Ascending aorta (tissue), 2 donors: ENCODE measurements at regions of chr2 and their contacts with region 1.

Region 1: DNA sequence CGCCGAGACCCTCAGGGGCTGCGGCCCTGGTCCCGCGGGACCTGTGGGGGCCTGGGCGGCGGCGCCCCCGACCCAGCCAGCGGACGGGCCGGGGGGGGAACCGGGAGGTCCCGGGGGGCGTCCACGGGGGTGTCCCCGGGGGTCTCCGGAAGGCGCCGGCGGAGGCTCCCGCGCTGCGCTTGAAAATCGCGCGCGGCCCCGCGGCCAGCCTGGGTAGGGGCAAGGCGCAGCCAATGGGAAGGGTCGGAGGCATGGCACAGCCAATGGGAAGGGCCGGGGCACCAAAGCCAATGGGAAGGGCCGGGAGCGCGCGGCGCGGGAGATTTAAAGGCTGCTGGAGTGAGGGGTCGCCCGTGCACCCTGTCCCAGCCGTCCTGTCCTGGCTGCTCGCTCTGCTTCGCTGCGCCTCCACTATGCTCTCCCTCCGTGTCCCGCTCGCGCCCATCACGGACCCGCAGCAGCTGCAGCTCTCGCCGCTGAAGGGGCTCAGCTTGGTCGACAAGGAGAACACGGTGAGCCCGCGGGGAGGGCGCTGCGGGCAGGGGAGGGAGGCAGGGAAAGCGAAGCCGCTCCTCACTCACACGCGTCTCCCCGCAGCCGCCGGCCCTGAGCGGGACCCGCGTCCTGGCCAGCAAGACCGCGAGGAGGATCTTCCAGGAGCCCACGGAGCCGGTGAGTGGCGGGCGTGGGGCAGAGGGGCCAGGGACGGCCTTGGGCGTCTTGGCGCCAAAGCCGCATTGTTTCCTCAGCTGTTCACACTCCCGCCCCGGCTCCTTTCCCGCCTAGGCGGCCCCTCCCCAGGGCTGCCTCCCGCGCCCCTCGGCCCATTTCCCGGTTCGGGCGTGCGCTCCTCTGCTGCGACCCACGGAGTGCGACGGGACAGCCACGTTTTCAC is at the start of gene RRM2:
- DNase-seq: peak; percentile 76 to 94
- H3K4me3 ChIP-seq: peak within 1 kb of the TSS; percentile 47 to 69
- H3K27ac ChIP-seq: no peak within 1 kb of the TSS
- H3K4me1 ChIP-seq: peaks cover 13 to 20% of the 10 kb centered on the region in 2 donors
- H3K27me3 ChIP-seq: peaks cover 7% of the 10 kb centered on the region
- CTCF ChIP-seq: no peak
- total RNA-seq, gene RRM2: not detected

Region 2: GRCh38 chr2:10003206-10004125 is 119.2 kb before region 1 on chr2:
- intact Hi-C with region 1: no loop called
- DNase-seq: no peak
- H3K4me3 ChIP-seq: no peak overlapping the region
- H3K27ac ChIP-seq: no peak overlapping the region
- H3K4me1 ChIP-seq: peaks cover 13 to 23% of the 10 kb centered on the region in 2 donors
- H3K27me3 ChIP-seq: no peaks in the 10 kb centered on the region
- CTCF ChIP-seq: no peak

Region 3: GRCh38 chr2:10072656-10073480 is 49.8 kb before region 1 on chr2:
- intact Hi-C with region 1: loop called (anchors 2 kb)
- DNase-seq: peak; percentile 30 to 92
- H3K4me3 ChIP-seq: no peak overlapping the region
- H3K27ac ChIP-seq: no peak overlapping the region
- H3K4me1 ChIP-seq: no peaks in the 10 kb centered on the region
- H3K27me3 ChIP-seq: no peaks in the 10 kb centered on the region
- CTCF ChIP-seq: peak; percentile 82 to 89 (median 84)

Region 4: DNA sequence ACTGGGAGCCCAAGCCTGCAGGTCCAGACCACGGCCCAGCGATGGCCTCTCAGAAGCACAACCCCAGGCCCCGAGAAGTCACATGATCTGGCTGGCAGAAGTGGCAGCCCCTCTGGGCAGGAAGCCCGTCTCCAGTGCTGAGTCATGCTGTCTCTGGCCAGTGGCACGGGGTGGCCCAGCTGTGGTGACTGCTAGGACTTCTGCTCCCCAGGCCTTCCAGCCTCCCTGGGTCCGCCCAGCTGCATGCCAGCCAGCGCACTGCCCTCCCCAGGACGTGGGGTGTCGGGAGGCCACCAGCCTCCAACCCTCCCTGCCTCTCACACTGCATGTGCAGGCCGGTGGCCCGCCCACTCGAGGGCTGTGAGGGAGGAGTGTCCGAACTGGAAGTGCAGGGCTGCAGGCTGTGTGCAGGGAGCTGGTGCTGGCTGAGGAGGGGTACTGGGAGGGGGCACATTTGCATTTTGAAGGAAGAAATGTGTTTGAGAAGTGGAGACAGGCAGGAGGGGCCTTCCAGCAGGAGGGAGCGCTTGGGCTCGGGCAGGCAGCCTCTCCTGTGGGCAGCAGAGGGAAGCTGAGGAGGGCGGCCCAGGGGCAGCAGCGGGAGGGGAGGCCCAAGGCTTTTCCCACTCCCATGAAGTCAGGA is 163.0 kb after region 1 on chr2:
- intact Hi-C with region 1: loop called (anchors 5 kb)
- DNase-seq: peak; percentile 75 to 91
- H3K4me3 ChIP-seq: peak overlapping the region in 1 of 2 donors; percentile 25
- H3K27ac ChIP-seq: peak overlapping the region; percentile 75 to 84
- H3K4me1 ChIP-seq: peaks cover 4 to 16% of the 10 kb centered on the region in 2 donors
- H3K27me3 ChIP-seq: no peaks in the 10 kb centered on the region
- CTCF ChIP-seq: peak in 2 of 3 experiments; percentile 5 to 13

Region 5: GRCh38 chr2:10408649-10409579 is 286.3 kb after region 1 on chr2:
- intact Hi-C with region 1: loop called (anchors 1 kb)
- DNase-seq: peak in 1 of 2 donors; percentile 86
- H3K4me3 ChIP-seq: no peak overlapping the region
- H3K27ac ChIP-seq: peak overlapping the region in 1 of 2 donors; percentile 52
- H3K4me1 ChIP-seq: peaks cover 24 to 43% of the 10 kb centered on the region in 2 donors
- H3K27me3 ChIP-seq: no peaks in the 10 kb centered on the region
- CTCF ChIP-seq: peak; percentile 91 to 94 (median 91)

Region 6: DNA sequence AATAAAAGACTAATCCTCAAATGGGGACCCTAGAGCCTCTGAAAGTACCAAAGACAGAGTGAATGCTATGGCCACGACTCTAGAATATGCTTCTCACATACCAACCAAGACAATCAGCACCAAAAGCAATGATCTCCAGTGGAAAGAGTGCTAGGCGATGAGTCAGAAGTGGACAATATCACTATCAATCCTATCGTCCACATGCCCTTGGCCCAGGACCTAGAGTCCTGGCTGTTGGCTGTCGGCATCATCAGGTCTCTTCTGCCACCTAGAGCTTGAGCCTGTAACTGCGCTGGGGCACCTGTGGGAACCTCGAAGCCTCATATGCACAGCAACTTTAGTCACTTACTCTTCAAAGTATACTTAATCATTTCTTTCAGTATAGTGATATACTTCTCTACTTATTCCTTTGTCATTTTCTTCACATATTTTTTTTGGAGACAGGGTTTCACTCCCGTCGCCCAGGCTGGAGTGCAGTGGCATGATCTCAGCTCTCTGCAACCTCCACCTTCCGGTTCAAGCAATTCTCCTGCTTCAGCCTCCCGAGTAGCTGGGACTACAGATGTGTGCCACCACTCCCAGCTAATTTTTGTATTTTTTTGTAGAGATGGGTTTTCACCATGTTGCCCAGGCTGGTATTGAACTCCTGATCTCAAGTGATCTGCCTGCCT is 537.4 kb after region 1 on chr2:
- intact Hi-C with region 1: loop called (anchors 10 kb)
- DNase-seq: no peak
- H3K4me3 ChIP-seq: no peak overlapping the region
- H3K27ac ChIP-seq: no peak overlapping the region
- H3K4me1 ChIP-seq: no peaks in the 10 kb centered on the region
- H3K27me3 ChIP-seq: no peaks in the 10 kb centered on the region
- CTCF ChIP-seq: peak; percentile 11 to 54 (median 36)